ENCODE measurements at regions of chr1 and their contacts with region 1.

Region 1: DNA sequence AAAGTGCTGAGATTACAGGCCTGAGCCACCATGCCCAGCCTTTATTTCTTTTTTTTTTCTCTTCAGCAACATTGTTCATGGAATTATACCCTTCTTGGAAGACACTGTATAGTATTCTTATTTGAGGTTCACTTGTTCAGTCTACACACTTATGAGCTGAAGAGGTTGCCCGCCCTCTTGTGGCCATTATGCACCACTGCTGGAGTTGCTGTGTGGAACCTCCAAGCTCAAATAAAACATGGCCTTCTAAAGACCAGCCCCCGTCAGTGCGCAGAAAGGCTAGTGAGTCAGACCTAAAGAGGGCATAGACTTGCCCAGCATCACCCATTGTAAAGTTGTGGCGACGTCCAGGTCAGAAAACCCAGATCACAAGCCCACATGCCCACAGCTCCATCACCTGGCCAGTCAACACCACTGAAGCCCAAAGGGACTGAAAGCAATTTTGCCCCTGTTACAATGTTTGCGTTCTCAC is 20.4 kb downstream of the LURAP1 start:
- DNase-seq: peak; percentile 94
- ATAC-seq: peak; percentile 95
- H3K4me3 ChIP-seq: no peak overlapping the region
- H3K27ac ChIP-seq: peak overlapping the region; percentile 21
- H3K4me1 ChIP-seq: peaks cover 5% of the 10 kb centered on the region; the same call in 1 of the 2 replicates
- H3K27me3 ChIP-seq: no peaks in the 10 kb centered on the region
- CTCF ChIP-seq: peak; percentile 97

Region 2: DNA sequence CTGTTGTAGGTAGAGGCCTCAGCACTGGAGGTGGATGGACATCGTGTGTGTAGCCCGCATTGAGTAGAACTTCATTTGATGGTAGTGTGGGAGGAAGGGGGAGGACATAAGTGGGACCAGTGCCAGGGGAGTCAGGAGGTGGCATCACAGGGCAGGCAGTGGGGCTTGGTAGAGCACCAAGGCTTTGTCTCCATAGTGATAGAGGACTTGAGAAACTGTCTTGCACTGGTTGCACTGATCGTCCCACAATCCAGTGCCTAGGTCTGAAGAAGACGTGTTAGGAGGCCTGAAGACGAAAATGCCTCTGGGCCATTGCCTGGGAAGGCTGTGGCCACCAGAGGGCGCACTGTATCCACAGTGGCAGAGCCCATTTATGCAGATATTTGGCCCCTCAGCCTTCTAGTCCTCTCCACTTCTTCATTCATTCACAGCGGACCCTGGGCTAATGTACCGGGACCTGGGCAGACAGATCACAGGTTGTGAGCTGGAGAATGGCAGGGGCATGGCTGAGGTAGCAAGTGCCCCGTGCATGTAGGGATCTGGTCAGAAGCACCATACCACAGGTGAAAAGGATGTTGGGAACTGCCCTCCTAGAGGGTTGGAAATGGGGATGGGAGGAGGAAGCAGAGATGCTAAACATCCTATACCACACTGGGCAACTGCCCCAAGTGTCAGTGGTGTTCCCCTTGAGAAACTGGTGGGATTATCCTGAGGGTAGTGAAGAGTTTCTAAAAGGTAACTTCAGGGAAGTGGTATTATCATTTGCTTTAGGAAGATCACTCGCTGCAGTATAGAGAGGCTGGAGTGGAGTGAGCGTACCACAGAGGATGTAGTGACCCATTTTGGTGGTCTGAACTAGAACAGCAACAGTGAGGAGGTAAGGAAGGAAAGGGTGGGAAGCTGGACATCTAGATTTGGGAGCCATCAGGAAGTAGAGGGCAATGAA is 186.3 kb before region 1 on chr1:
- CTCF ChIA-PET with region 1: interaction called, 7 read pairs
- POLR2A ChIA-PET with region 1: no interaction called
- intact Hi-C with region 1: loop called (anchors 1 kb)
- DNase-seq: peak; percentile 91
- ATAC-seq: peak; percentile 57
- H3K4me3 ChIP-seq: no peak overlapping the region
- H3K27ac ChIP-seq: no peak overlapping the region
- H3K4me1 ChIP-seq: peaks cover 17% of the 10 kb centered on the region
- H3K27me3 ChIP-seq: no peaks in the 10 kb centered on the region
- CTCF ChIP-seq: peak; percentile 98

Region 3: GRCh38 chr1:46132529-46133180 is 90.9 kb before region 1 on chr1 and contains the start of gene PIK3R3:
- CTCF ChIA-PET with region 1: interaction called, 4 read pairs
- POLR2A ChIA-PET with region 1: no interaction called
- intact Hi-C with region 1: loop called (anchors 1 kb)
- DNase-seq: peak; percentile 98
- ATAC-seq: peak; percentile 86
- H3K4me3 ChIP-seq: peak within 1 kb of the TSS; percentile 95
- H3K27ac ChIP-seq: peak within 1 kb of the TSS; percentile 94
- H3K4me1 ChIP-seq: peaks cover 49% of the 10 kb centered on the region
- H3K27me3 ChIP-seq: no peaks in the 10 kb centered on the region
- CTCF ChIP-seq: no peak
- total RNA-seq, gene PIK3R3: 17.7 and 18.5 TPM in 2 replicates

Region 4: GRCh38 chr1:46197964-46198811 is 25.3 kb before region 1 on chr1 and contains the start of gene POMGNT1:
- CTCF ChIA-PET with region 1: interaction called, 7 read pairs
- POLR2A ChIA-PET with region 1: no interaction called
- intact Hi-C with region 1: loop called (anchors 1 kb)
- DNase-seq: peak; percentile 65
- ATAC-seq: peak; percentile 90
- H3K4me3 ChIP-seq: peak within 1 kb of the TSS; percentile 95
- H3K27ac ChIP-seq: peak within 1 kb of the TSS; percentile 72
- H3K4me1 ChIP-seq: peaks cover 9% of the 10 kb centered on the region
- H3K27me3 ChIP-seq: no peaks in the 10 kb centered on the region
- CTCF ChIP-seq: peak; percentile 51; the same call in 1 of the 2 replicates
- total RNA-seq, gene POMGNT1: 84.8 and 92.5 TPM in 2 replicates

Region 5: GRCh38 chr1:46211051-46211450 is 12.5 kb before region 1 on chr1:
- CTCF ChIA-PET with region 1: no interaction called
- POLR2A ChIA-PET with region 1: no interaction called
- intact Hi-C with region 1: no loop called
- DNase-seq: no peak
- ATAC-seq: no peak
- H3K4me3 ChIP-seq: no peak overlapping the region
- H3K27ac ChIP-seq: no peak overlapping the region
- H3K4me1 ChIP-seq: no peaks in the 10 kb centered on the region
- H3K27me3 ChIP-seq: no peaks in the 10 kb centered on the region
- CTCF ChIP-seq: no peak

Region 6: GRCh38 chr1:46247436-46248121 is 24.1 kb after region 1 on chr1 and contains the start of gene RAD54L:
- CTCF ChIA-PET with region 1: interaction called, 11 read pairs
- POLR2A ChIA-PET with region 1: interaction called, 47 read pairs
- intact Hi-C with region 1: no loop called
- DNase-seq: peak; percentile 99
- ATAC-seq: peak; percentile 89
- H3K4me3 ChIP-seq: peak within 1 kb of the TSS; percentile 96
- H3K27ac ChIP-seq: peak within 1 kb of the TSS; percentile 50
- H3K4me1 ChIP-seq: peaks cover 22% of the 10 kb centered on the region
- H3K27me3 ChIP-seq: no peaks in the 10 kb centered on the region
- CTCF ChIP-seq: no peak
- total RNA-seq, gene RAD54L: 26.0 and 29.4 TPM in 2 replicates

Region 7: DNA sequence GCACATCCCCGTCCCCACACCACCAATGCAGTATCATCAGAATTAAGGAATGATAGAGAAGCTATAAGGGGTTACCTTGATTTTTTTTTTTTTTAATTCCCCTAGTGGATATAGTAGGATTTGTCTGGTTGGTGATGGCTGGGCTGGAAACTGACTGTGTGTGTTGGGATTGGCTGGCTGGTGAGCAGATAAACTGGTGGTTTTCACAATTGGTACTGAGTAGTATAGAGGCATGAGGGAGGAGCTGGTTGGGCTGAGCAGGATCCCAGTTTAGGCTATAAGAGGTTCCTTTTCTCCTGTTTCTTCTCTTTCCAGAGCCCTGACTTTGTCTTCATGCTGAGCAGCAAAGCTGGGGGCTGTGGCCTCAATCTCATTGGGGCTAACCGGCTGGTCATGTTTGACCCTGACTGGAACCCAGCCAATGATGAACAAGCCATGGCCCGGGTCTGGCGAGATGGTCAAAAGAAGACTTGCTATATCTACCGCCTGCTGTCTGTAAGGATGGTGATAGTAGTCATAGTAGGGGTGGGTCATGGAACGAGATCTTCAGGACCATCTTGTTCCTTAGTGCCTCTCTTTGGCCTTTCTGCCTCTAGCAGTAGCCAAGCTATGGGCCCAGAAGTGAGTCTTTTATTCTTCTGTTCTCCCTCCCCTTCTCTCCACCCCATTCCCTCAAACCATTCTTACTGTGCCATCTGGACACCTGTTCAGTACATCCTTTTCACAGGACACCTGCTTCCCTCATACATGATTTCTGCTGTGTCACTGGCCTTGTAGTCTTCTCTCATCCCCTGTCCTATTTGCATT is 50.9 kb after region 1 on chr1:
- CTCF ChIA-PET with region 1: no interaction called
- POLR2A ChIA-PET with region 1: no interaction called
- intact Hi-C with region 1: no loop called
- DNase-seq: no peak
- ATAC-seq: peak; percentile 20
- H3K4me3 ChIP-seq: no peak overlapping the region
- H3K27ac ChIP-seq: no peak overlapping the region
- H3K4me1 ChIP-seq: peaks cover 8% of the 10 kb centered on the region; the same call in 1 of the 2 replicates
- H3K27me3 ChIP-seq: no peaks in the 10 kb centered on the region
- CTCF ChIP-seq: no peak